ENCODE measurements at regions of chr2 and their contacts with region 1.

Region 1: DNA sequence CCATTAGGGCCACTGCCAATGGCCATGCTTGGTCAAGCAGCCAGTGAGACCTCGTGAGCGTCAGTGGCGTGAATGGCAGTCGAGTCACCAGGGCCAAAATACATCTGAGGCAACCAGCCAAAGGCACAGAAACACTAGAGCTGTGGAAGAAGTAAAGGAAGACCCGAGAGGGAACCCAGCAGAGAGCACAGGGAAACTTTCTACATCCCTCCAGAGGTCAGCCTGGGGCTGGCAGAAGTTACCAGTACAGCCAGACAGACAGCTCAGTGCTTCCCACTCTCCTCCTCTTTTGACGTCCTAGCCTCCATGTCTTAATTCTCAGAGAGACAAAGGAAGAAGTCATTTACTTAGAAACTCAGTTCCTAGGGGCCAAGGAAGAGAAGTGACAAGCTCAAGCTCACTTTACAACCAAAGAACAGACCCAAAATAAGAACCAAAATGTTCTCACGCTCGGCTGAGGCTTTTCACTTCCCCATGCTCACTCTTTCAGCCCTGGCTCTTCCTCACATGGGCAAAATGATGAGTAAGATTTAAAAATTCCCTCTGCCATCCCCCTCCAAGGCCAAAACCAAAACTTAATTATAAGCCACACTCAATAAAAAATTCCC is 8.7 kb downstream of the CYRIA start:
- DNase-seq: peak; percentile 90

Region 2: GRCh38 chr2:16525265-16525887 is 131.5 kb before region 1 on chr2:
- intact Hi-C with region 1: no loop called
- DNase-seq: no peak

Region 3: GRCh38 chr2:16727256-16727655 is 70.4 kb after region 1 on chr2:
- intact Hi-C with region 1: loop called in 1 of 2 experiments (anchors 10 kb)
- DNase-seq: no peak

Measured in posterior vena cava (tissue), 2 donors.